ENCODE measurements at regions of chr15 and their contacts with region 1.

Region 1: GRCh38 chr15:66497502-66498455 is at the start of gene SNAPC5:
- DNase-seq: peak; percentile 99
- ATAC-seq: peak; percentile 92
- H3K4me3 Mint-ChIP-seq: peak within 1 kb of the TSS; percentile 97
- H3K27ac Mint-ChIP-seq: peak within 1 kb of the TSS; percentile 98
- H3K4me1 Mint-ChIP-seq: peaks cover 63% of the 10 kb centered on the region
- H3K27me3 Mint-ChIP-seq: no peaks in the 10 kb centered on the region
- total RNA-seq, gene SNAPC5: 25.0 to 25.7 TPM

Region 2: DNA sequence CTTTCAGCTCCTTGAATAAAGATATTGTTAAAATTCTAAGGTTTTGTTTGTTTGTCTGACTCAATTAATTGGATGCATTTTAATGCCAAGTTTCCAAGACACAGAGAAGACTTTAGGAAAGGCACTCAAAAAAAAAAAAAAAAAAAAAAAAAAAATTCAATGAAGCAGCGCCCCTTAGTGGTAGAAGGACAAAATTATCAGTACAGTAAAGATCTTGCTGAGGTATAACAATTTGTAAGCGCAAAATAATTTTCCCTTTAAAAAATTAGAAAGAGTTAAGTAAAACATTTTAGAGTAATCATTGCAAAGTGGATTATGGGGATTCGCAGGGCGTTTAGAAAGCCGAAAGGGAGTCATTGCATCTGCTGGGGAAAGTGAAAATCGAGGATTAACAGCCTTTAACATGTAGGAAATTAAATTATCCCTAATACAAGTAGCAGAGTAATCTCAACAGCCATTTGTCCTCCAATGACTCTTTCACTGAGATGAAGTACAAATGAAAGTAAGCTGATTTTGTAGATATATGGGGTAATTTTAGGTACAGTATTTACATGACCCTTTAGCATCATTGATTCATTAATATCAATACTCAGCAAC is 210.2 kb before region 1 on chr15:
- CTCF ChIA-PET with region 1: interaction called, 53 read pairs
- POLR2A ChIA-PET with region 1: no interaction called
- DNase-seq: no peak
- ATAC-seq: no peak
- H3K4me3 Mint-ChIP-seq: no peak overlapping the region
- H3K27ac Mint-ChIP-seq: no peak overlapping the region
- H3K4me1 Mint-ChIP-seq: peaks cover 28% of the 10 kb centered on the region
- H3K27me3 Mint-ChIP-seq: no peaks in the 10 kb centered on the region

Region 3: DNA sequence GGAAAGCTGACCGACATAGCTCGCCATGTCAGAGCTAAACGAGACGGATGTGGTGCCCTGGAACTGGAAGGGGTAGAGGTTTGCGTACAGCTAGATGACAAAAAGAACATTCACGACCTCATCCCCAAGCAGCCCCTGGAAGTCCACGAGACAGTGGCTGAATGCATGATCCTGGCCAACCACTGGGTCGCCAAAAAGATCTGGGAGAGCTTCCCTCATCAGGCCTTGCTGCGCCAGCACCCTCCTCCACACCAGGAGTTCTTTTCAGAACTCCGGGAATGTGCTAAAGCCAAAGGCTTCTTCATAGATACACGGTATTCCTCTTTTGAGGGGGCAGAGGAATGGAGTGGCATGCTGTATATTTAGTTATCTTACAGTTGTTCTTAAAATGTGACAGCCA is 171.7 kb before region 1 on chr15:
- CTCF ChIA-PET with region 1: interaction called, 14 read pairs
- POLR2A ChIA-PET with region 1: no interaction called
- DNase-seq: no peak
- ATAC-seq: no peak
- H3K4me3 Mint-ChIP-seq: no peak overlapping the region
- H3K27ac Mint-ChIP-seq: no peak overlapping the region
- H3K4me1 Mint-ChIP-seq: no peaks in the 10 kb centered on the region
- H3K27me3 Mint-ChIP-seq: no peaks in the 10 kb centered on the region

Region 4: DNA sequence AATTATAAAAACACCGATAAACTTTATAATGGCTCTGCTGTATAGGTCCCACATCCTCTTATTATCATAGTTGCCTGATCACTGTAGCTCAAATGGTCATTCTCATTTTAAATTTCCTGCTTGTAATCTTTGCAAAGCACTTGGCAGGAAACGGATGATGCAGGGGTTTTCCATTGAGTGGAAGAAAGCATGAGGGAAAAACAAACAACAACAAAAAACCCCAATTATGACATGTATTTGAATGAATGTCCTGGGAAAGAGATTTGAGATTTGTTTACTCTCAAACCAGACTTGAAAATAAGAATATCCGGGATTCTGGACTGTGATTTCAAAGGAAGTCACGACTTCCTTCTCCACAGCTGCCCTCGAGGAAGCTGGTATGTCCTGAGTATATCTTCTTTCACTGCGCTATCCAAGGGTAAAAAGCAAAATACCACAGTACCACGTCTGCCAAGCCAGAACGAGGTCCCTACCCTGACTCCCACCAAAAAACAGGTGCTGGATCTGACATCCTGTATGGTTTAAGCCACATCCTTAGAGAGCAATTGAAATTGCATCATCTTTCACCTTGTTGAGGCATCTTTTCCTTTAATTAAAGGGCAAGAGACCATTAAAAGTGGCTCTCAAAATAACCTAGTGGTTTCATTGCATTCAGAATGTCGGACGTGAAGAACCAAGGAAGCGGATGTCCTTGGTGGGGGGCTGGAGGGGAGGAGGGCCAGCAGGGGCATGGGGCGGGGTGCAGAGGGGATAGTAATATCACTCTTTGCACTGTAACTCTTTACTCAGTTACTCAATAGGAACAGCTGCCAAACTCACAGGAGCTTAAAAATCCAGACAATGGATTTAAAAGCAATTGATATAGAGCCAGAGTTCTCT is 127.8 kb before region 1 on chr15:
- CTCF ChIA-PET with region 1: interaction called, 12 read pairs
- POLR2A ChIA-PET with region 1: interaction called, 6 read pairs
- DNase-seq: peak; percentile 69
- ATAC-seq: peak; percentile 83
- H3K4me3 Mint-ChIP-seq: peak overlapping the region; percentile 56
- H3K27ac Mint-ChIP-seq: peak overlapping the region; percentile 98
- H3K4me1 Mint-ChIP-seq: peaks cover 29% of the 10 kb centered on the region
- H3K27me3 Mint-ChIP-seq: no peaks in the 10 kb centered on the region

Region 5: GRCh38 chr15:66401130-66402021 is 96.4 kb before region 1 on chr15:
- CTCF ChIA-PET with region 1: interaction called, 87 read pairs
- POLR2A ChIA-PET with region 1: interaction called, 10 read pairs
- DNase-seq: peak; percentile 45
- ATAC-seq: peak; percentile 78
- H3K4me3 Mint-ChIP-seq: peak overlapping the region; percentile 67
- H3K27ac Mint-ChIP-seq: peak overlapping the region; percentile 86
- H3K4me1 Mint-ChIP-seq: peaks cover 77% of the 10 kb centered on the region
- H3K27me3 Mint-ChIP-seq: no peaks in the 10 kb centered on the region

Region 6: DNA sequence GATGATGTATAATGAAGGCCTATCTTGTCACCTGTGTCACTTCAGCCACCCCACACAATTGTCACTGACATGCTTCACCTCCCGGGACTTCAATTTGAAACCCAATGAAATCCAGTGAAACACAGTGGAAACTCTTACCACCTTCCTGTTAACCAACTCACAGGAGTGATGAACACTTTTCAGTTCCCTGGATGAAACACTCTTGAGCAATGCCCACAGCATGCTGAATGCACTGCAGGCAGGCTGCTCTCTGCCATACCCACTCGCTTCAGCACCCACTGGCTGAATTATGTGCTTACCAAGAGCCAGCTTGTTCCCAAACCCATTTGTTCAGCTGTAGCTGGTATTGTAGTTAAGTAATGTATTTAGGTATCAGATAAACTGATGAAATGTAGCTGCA is 64.1 kb before region 1 on chr15:
- CTCF ChIA-PET with region 1: interaction called, 10 read pairs
- POLR2A ChIA-PET with region 1: no interaction called
- DNase-seq: no peak
- ATAC-seq: no peak
- H3K4me3 Mint-ChIP-seq: no peak overlapping the region
- H3K27ac Mint-ChIP-seq: peak overlapping the region; percentile 41
- H3K4me1 Mint-ChIP-seq: peaks cover 45% of the 10 kb centered on the region
- H3K27me3 Mint-ChIP-seq: no peaks in the 10 kb centered on the region

Measured in activated CD8-positive, alpha-beta T cell treated with anti-CD3 and anti-CD28 coated beads, Interleukin-2, amount 10 ng/mL, durations not matched to agents 7 days and 5 days (primary cell).